ENCODE measurements at regions of chr17 and their contacts with region 1.

Region 1: GRCh38 chr17:49101054-49101947 is 31.3 kb upstream of the B4GALNT2 start:
- DNase-seq: peak; percentile 90
- H3K4me3 Mint-ChIP-seq: peak overlapping the region; percentile 53
- H3K27ac Mint-ChIP-seq: peak overlapping the region; percentile 93
- H3K4me1 Mint-ChIP-seq: peaks cover 39% of the 10 kb centered on the region
- H3K27me3 Mint-ChIP-seq: no peaks in the 10 kb centered on the region
- CTCF ChIP-seq: no peak

Region 2: DNA sequence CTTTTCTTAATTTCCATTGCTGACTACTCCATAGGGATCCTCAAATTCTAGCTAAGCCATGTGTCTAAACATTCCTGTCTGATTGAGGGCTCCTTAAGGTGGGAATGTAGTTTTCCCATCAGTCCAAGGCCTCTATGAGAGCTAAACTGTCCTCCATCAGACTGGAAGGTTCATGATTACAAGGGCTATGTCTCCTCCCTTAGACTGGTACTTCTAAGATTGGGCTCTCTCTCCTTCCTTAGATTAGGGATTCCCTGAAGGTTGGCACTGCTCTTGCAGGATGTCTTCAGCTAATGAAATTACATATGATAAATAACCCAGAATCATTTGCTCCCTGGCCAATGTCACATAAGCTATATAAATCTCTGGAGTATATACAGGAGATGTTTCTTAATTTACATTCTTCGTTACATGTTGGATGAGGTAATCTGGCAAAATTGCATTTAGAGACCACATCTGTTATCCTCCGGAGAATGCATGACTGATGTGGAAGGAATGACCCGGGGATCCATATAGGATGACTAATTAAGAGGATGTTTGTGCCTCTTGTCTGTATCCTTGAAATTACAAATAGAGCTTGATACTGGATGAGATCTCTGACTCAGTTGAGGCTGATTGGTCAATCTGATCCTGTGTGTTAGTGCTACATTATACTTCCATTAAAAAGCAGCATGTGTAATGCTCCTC is 45.5 kb after region 1 on chr17:
- CTCF ChIA-PET with region 1: interaction called, 10 read pairs
- intact Hi-C with region 1: no loop called
- DNase-seq: peak; percentile 31
- H3K4me3 Mint-ChIP-seq: no peak overlapping the region
- H3K27ac Mint-ChIP-seq: peak overlapping the region; percentile 22
- H3K4me1 Mint-ChIP-seq: peaks cover 21% of the 10 kb centered on the region
- H3K27me3 Mint-ChIP-seq: peaks cover 23% of the 10 kb centered on the region
- CTCF ChIP-seq: no peak

Region 3: DNA sequence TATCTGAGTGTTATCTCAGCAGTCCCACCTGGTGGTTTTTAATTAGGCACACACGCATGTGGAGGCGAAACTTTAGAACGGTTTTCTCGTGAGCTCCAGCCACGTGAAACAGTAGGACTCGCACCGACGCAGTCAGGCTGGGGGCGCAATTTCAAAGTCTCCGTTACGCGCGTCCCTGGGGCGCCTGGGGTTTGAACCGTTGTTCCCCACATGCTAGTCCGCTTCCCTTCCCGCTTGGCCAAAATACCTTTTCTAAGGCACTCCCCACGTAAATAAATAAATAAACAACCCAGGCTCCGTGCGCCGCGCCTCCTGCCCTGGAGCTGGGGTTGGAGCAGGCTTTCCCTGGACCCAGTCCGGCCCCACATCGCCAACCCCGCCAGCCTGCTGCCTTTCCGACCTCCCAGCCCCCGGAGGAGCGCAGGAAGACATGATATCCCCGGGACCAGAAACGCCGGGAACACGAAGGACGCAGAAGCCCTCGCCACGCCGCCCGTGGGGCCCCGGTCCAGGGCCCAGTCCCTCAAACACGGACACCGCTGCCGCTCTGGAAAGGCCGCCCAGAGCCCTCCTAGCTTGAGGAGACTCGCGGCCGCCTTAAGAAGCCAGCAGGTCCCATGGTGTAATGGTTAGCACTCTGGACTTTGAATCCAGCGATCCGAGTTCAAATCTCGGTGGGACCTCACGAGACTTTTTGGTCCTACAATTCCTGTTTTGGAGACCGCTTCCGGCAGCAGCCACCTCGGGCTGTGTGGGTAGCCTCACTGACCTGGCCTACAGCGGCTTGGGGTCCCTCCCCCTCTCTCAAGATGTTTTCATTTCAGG is 90.8 kb after region 1 on chr17:
- CTCF ChIA-PET with region 1: interaction called, 11 read pairs
- intact Hi-C with region 1: no loop called
- DNase-seq: peak; percentile 96
- H3K4me3 Mint-ChIP-seq: peak overlapping the region; percentile 78
- H3K27ac Mint-ChIP-seq: peak overlapping the region; percentile 98
- H3K4me1 Mint-ChIP-seq: peaks cover 9% of the 10 kb centered on the region
- H3K27me3 Mint-ChIP-seq: no peaks in the 10 kb centered on the region
- CTCF ChIP-seq: peak; percentile 31

Measured in Calu3 (cell line).